ENCODE measurements at regions of chr4 and their contacts with region 1.

Region 1: DNA sequence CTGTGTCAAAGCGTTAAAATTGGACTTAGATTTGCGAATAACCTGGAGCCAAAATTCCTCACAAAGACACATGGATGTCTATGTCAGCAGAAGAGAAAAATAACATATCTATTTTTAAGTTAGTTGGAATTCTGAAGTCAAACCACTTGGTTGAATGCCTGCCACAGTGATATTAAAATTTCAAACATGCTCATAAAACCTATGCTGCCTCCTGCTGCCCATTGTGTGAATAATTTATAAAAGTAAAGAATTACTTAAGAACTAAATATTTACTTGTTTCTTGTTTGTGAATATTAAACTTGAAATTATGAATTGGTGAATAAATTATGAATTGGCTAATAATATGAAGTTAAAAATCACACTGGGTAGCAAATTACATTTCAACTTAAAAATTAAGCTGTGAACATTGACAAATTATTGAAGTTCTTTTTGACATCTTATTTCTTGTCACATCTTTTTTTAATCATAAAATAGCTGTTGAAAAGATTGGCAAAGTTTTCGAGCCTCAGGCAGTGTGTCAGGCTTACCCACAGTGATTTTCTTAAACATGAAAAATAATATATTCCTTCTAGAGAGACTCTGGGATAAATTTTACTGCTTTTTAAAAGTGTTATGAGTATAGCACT is 35.4 kb downstream of the FABP2 start:
- DNase-seq: no peak
- ATAC-seq: peak; percentile 79
- H3K4me3 ChIP-seq: no peak overlapping the region
- H3K27ac ChIP-seq: no peak overlapping the region
- H3K4me1 ChIP-seq: peaks cover 0 to 5% of the 10 kb centered on the region in 2 donors
- H3K27me3 ChIP-seq: no peaks in the 10 kb centered on the region

Region 2: GRCh38 chr4:119041951-119042560 is 244.4 kb before region 1 on chr4:
- intact Hi-C with region 1: loop called (anchors 5 kb)
- DNase-seq: peak; percentile 50 to 59
- ATAC-seq: peak; percentile 78
- H3K4me3 ChIP-seq: peak overlapping the region in 1 of 2 donors; percentile 48
- H3K27ac ChIP-seq: peak overlapping the region in 1 of 2 donors; percentile 90
- H3K4me1 ChIP-seq: peaks cover 4 to 11% of the 10 kb centered on the region in 2 donors
- H3K27me3 ChIP-seq: no peaks in the 10 kb centered on the region

Region 3: DNA sequence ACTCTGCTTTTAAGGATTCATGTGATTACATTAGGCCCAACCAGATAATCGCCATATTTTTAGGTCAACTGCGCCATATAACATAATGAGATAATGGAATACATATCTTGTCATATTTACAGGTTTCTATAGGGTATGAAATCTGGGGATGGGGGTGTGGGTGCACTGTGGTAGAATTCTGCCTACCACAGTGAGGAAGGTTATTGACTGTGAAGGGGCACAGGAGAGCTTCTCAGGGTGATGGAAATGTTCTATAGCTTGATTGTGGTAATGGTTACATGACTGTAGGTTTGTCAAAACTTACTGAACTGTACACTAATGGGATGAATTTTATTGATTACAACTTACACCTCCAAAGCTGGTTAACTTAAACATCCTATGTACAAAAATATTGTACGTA is 58.1 kb before region 1 on chr4:
- intact Hi-C with region 1: no loop called
- DNase-seq: no peak
- ATAC-seq: no peak
- H3K4me3 ChIP-seq: no peak overlapping the region
- H3K27ac ChIP-seq: no peak overlapping the region
- H3K4me1 ChIP-seq: peaks cover 0 to 5% of the 10 kb centered on the region in 2 donors
- H3K27me3 ChIP-seq: no peaks in the 10 kb centered on the region

Measured in aorta (tissue), 5 donors.